ENCODE measurements at regions of chr2 and their contacts with region 1.

Region 1: DNA sequence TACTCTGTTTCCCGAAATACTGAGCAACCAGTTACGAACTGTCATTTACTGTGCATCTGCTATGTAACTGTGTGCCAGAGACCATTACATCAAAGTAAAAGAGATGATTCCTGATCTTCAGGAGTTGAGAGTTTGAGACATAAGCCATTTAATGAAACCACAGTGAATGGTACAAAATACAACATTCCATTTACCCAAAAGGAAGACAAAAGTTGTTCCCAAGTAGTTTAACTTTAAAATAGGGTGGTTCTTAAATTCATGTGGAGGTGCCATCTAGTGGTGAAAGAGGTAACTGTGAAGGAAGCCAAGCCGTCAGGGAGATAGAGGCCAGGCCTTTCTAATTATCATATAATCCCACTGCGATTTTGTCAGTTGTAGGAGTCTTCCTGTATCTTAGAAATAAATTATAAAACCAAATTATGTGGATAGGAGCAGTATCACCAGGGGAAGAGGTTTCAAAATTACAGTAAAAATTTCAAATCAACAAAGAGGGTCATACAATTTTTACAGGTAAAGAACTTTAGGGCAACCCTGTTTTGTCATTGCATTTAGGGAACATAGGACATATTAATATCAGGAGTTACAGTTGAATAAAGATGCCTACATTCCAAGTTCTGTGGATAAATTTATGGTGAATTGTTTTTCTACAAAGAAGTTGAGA is 67.7 kb downstream of the EPAS1 start:
- DNase-seq: no peak
- ATAC-seq: peak; percentile 63
- H3K4me3 ChIP-seq: no peak overlapping the region
- H3K27ac ChIP-seq: peak overlapping the region; percentile 31
- H3K4me1 ChIP-seq: peaks cover 67% of the 10 kb centered on the region
- H3K27me3 ChIP-seq: no peaks in the 10 kb centered on the region
- CTCF ChIP-seq: peak; percentile 81

Region 2: GRCh38 chr2:46002507-46002883 is 362.4 kb before region 1 on chr2:
- intact Hi-C with region 1: loop called (anchors 10 kb)
- DNase-seq: no peak
- ATAC-seq: peak; percentile 91
- H3K4me3 ChIP-seq: peak overlapping the region; percentile 2
- H3K27ac ChIP-seq: peak overlapping the region; percentile 81
- H3K4me1 ChIP-seq: peaks cover 28% of the 10 kb centered on the region
- H3K27me3 ChIP-seq: no peaks in the 10 kb centered on the region
- CTCF ChIP-seq: no peak